ENCODE measurements at regions of chr1 and their contacts with region 1.

Region 1: DNA sequence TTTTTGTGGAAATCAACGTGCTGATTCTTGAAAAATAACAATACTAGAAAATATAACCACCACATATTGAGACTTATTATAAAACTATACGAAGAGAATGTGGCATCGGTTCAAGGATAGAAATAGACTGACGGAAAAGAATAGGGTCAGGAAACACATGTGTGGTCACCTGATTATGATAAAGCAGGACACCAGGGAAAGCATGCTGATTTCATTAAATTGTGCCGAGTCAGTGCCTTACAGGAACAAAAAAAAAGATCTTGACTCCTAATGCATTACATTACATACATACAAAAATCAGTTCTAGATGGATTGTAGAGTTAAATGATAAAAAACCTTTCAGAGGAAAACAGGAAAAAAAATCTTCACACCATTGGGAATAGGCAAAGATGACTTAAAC is 43.5 kb upstream of the SERPINC1 start:
- DNase-seq: no peak
- ATAC-seq: peak in 1 of 4 donors; percentile 26
- H3K4me3 ChIP-seq: no peak overlapping the region
- H3K27ac ChIP-seq: no peak overlapping the region
- H3K4me1 ChIP-seq: no peaks in the 10 kb centered on the region
- H3K27me3 ChIP-seq: no peaks in the 10 kb centered on the region
- CTCF ChIP-seq: no peak

Region 2: DNA sequence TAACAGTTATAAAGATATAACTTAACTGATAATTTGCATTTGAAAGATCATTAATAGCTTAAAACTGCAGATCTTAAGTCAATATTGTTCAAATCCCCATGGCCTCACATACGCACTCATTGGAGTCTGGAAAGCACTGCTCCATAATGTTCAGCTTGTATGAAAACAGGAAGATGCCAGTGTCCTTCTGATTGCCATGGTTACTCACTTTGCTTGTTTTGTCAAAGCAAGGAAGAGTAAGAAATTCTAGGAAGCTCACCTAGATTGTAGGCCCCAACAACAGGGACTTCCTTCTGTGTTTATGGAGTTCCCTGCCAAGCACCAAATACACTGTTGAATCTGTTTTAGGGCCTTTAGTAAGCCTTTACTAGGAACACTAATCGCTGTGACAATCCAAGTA is 103.7 kb before region 1 on chr1:
- intact Hi-C with region 1: loop called in 1 of 2 experiments (anchors 5 kb)
- DNase-seq: no peak
- ATAC-seq: no peak
- H3K4me3 ChIP-seq: no peak overlapping the region
- H3K27ac ChIP-seq: no peak overlapping the region
- H3K4me1 ChIP-seq: no peaks in the 10 kb centered on the region
- H3K27me3 ChIP-seq: no peaks in the 10 kb centered on the region
- CTCF ChIP-seq: no peak

Region 3: GRCh38 chr1:174743654-174744561 is 783.3 kb after region 1 on chr1:
- intact Hi-C with region 1: no loop called
- DNase-seq: no peak
- ATAC-seq: peak in 1 of 4 donors; percentile 49
- H3K4me3 ChIP-seq: no peak overlapping the region
- H3K27ac ChIP-seq: no peak overlapping the region
- H3K4me1 ChIP-seq: no peaks in the 10 kb centered on the region
- H3K27me3 ChIP-seq: no peaks in the 10 kb centered on the region
- CTCF ChIP-seq: peak; percentile 64

Measured in psoas muscle (tissue), 8 donors.